Uterus (tissue), 4 donors: ENCODE measurements at regions of chr17 and their contacts with region 1.

Region 1: GRCh38 chr17:2054512-2055291 is at the start of gene HIC1:
- DNase-seq: peak; percentile 83 to 85
- H3K4me3 ChIP-seq: peak within 1 kb of the TSS; percentile 46 to 90
- H3K27ac ChIP-seq: peak within 1 kb of the TSS; percentile 94 to 99
- H3K4me1 ChIP-seq: peaks cover 3 to 26% of the 10 kb centered on the region in 2 donors
- H3K27me3 ChIP-seq: no peaks in the 10 kb centered on the region
- CTCF ChIP-seq: peak; percentile 83 to 99 (median 98)
- POLR2A ChIP-seq: peak; percentile 89 to 94
- total RNA-seq, gene HIC1: 21.8 to 86.9 (median 54.2) TPM

Region 2: DNA sequence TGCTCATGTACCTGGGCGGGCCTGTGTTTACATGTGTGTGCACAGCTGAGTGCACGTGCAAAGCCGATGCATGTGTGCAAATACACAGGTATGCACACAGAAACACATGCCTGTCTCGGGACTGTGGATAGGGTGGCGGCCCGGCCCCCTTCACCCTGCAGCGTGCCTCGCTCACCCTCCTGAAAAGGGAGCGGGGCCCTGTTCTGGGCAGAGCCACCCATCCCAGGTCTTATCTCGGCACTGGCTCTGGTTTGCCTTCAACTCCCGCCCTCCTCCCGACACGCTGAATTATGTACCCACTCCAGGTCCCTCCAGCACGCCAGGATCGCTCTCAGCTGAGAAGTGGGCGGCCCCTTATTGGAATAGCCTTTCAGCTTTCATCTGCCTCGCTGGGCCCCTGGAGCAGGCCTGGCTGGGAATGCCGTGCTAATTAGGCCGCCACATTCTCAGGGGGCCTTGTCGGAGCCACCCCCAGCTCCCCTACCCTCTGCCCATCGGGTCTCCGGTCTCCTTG is 107.4 kb before region 1 on chr17:
- intact Hi-C with region 1: no loop called
- DNase-seq: no peak
- H3K4me3 ChIP-seq: no peak overlapping the region
- H3K27ac ChIP-seq: no peak overlapping the region
- H3K4me1 ChIP-seq: no peaks in the 10 kb centered on the region
- H3K27me3 ChIP-seq: no peaks in the 10 kb centered on the region
- CTCF ChIP-seq: no peak
- POLR2A ChIP-seq: no peak

Region 3: DNA sequence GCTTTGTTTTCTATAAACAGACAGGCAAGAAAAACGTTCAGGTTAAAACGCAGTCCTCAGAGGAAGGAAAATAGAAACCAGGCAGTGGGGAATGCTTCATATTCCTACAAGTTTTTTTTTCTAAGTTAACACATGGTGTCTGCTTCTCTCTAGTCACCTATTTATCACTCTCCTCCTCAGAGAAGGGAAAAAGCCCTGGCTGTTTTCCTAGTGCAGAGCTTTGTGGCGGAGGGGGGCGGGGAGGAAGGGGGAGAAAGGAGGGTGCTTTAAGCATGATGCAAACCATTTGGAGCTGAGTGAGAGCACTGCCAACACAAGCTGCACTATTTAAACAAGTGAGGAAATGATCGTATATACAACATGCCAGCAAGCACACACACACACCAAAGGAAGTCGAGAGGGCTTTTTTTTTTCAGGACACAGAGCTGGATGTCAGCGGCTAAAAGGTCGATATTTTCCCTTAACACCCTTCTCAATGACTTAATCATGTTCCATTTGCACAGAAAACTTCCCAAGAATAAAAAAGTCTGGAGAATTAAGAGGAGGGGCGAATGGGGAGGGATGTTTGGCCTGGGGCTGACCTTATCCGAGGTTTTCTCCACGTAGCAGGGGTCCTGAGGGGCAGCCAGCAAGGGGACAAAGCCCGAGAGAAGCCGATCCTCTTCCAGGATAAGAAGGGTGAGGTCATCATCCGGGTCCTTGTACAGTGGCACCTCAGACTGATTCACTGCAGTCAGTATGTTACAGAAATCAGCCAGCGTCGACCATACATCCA is 117.6 kb after region 1 on chr17:
- intact Hi-C with region 1: loop called (anchors 10 kb)
- DNase-seq: peak; percentile 88 to 94
- H3K4me3 ChIP-seq: peak overlapping the region in 1 of 2 donors; percentile 15
- H3K27ac ChIP-seq: peak overlapping the region; percentile 86 to 95
- H3K4me1 ChIP-seq: peaks cover 29 to 33% of the 10 kb centered on the region in 2 donors
- H3K27me3 ChIP-seq: no peaks in the 10 kb centered on the region
- CTCF ChIP-seq: no peak
- POLR2A ChIP-seq: peak in 1 of 2 donors; percentile 12

Region 4: GRCh38 chr17:2244545-2245525 is 190.1 kb after region 1 on chr17:
- intact Hi-C with region 1: loop called (anchors 2 kb)
- DNase-seq: peak; percentile 87 to 88
- H3K4me3 ChIP-seq: no peak overlapping the region
- H3K27ac ChIP-seq: peak overlapping the region; percentile 45 to 85
- H3K4me1 ChIP-seq: peaks cover 4 to 16% of the 10 kb centered on the region in 2 donors
- H3K27me3 ChIP-seq: no peaks in the 10 kb centered on the region
- CTCF ChIP-seq: peak; percentile 99
- POLR2A ChIP-seq: peak in 1 of 2 donors; percentile 20